T-cell (primary cell): ENCODE measurements at regions of chr1 and their contacts with region 1.

Region 1: DNA sequence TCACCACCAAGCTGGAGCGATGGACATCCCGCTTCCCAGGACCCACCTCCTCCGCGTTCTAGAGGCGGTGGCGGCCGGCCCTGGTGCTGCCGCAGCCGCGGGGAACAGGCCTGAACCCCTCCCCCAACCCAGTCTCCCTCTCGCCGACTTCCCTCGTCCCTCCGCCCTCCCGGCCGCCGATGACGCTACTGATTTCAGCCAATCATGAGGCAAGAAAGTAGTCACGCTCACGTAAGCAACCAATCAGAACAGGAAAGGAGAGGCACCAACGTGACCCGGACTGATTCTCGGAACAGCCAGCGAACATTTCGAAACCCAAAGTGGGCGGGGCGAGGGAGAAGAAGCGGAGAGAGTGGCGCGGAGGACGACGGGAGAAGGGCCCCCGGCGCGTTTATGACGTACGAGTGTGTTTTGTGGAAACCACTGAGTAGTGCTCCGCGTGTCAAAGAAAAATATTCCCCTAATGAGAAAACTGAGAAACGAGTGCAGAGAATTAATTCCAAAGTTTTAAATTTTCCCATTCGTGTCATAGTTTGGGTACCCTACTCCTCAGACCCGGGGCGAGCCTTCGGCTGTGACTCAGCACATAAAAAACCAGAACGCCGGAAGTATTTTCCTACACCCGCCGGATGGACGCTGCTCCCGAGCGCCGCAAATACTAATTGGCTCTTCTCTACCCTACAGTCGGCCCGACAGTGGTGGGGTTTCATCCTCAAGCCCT is at the start of gene NRDC:
- DNase-seq: peak; percentile 97 to 100 (median 100)
- ATAC-seq: peak; percentile 90 to 93 (median 92)
- H3K4me3 ChIP-seq: peak within 1 kb of the TSS; percentile 81 to 95
- H3K4me3 Mint-ChIP-seq: no peak within 1 kb of the TSS
- H3K27ac ChIP-seq: peak within 1 kb of the TSS; percentile 89
- H3K27ac Mint-ChIP-seq: no peak within 1 kb of the TSS
- H3K4me1 ChIP-seq: peaks cover 25 to 31% of the 10 kb centered on the region in 2 experiments
- H3K4me1 Mint-ChIP-seq: peaks cover 21 to 22% (median 22%) of the 10 kb centered on the region in 3 donors
- H3K27me3 ChIP-seq: peaks cover 0 to 13% of the 10 kb centered on the region in 2 experiments
- H3K27me3 Mint-ChIP-seq: peaks cover 9 to 18% of the 10 kb centered on the region in 2 donors
- total RNA-seq, gene NRDC: 107 to 118 (median 110) TPM

Region 2: GRCh38 chr1:51897699-51898031 is 18.9 kb after region 1 on chr1:
- CTCF ChIA-PET with region 1: interaction called, 6 to 10 read pairs
- POLR2A ChIA-PET with region 1: no interaction called
- DNase-seq: no peak
- ATAC-seq: no peak
- H3K4me3 ChIP-seq: no peak overlapping the region
- H3K4me3 Mint-ChIP-seq: no peak overlapping the region
- H3K27ac ChIP-seq: no peak overlapping the region
- H3K27ac Mint-ChIP-seq: no peak overlapping the region
- H3K4me1 ChIP-seq: no peaks in the 10 kb centered on the region
- H3K4me1 Mint-ChIP-seq: no peaks in the 10 kb centered on the region
- H3K27me3 ChIP-seq: peaks cover 3 to 26% of the 10 kb centered on the region in 2 experiments
- H3K27me3 Mint-ChIP-seq: peaks cover 48 to 55% of the 10 kb centered on the region in 2 donors